Activated naive CD8-positive, alpha-beta T cell treated with anti-CD3 and anti-CD28 coated beads, Interleukin-2, amount 10 ng/mL, durations not matched to agents 7 days and 5 days (primary cell): ENCODE measurements at regions of chr19 and their contacts with region 1.

Region 1: GRCh38 chr19:38842439-38843174 is 7.2 kb downstream of the HNRNPL start:
- DNase-seq: peak; percentile 71
- ATAC-seq: peak; percentile 91
- H3K4me3 Mint-ChIP-seq: peak overlapping the region; percentile 79
- H3K27ac Mint-ChIP-seq: peak overlapping the region; percentile 96
- H3K4me1 Mint-ChIP-seq: peaks cover 48% of the 10 kb centered on the region
- H3K27me3 Mint-ChIP-seq: no peaks in the 10 kb centered on the region

Region 2: GRCh38 chr19:38734426-38735256 is 108.0 kb before region 1 on chr19:
- POLR2A ChIA-PET with region 1: interaction called, 10 read pairs
- DNase-seq: peak; percentile 68
- ATAC-seq: peak; percentile 53
- H3K4me3 Mint-ChIP-seq: peak overlapping the region; percentile 88
- H3K27ac Mint-ChIP-seq: peak overlapping the region; percentile 90
- H3K4me1 Mint-ChIP-seq: peaks cover 26% of the 10 kb centered on the region
- H3K27me3 Mint-ChIP-seq: no peaks in the 10 kb centered on the region

Region 3: DNA sequence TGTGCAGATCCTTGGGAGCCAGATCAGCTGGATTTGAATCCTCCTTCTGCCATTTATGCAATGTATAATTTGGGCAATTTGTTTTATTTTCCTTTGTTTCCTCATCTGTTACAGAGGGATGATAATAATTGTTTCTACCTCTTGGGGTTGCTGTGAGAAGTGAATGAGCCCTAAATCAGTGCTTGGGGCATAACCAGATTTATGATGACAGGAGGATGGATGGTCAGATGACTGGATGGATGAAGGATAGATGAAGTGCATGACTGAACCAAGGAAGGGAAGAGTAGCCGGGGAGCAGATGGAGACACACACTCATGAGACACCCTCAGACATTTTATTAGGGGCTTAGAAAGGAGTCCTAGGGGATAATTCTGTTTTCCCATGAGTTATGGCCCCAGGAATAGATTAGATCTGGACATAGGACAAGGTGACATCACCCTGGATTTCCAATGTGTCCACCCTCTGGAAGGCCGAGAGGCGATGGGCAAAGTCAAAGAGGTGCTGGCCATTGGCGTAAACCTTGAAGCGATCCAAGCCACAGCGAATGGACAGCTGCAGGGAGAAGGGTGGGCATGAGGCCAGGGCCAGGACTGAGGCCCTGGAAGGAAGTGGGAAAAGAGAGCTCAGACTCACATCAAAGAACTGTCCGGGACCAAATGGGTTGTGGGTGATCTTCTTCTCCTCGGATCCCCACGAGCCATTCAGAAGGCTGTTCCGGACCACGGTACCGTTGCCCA is 41.1 kb before region 1 on chr19:
- POLR2A ChIA-PET with region 1: no interaction called
- DNase-seq: no peak
- ATAC-seq: no peak
- H3K4me3 Mint-ChIP-seq: no peak overlapping the region
- H3K27ac Mint-ChIP-seq: no peak overlapping the region
- H3K4me1 Mint-ChIP-seq: peaks cover 6% of the 10 kb centered on the region
- H3K27me3 Mint-ChIP-seq: no peaks in the 10 kb centered on the region

Region 4: DNA sequence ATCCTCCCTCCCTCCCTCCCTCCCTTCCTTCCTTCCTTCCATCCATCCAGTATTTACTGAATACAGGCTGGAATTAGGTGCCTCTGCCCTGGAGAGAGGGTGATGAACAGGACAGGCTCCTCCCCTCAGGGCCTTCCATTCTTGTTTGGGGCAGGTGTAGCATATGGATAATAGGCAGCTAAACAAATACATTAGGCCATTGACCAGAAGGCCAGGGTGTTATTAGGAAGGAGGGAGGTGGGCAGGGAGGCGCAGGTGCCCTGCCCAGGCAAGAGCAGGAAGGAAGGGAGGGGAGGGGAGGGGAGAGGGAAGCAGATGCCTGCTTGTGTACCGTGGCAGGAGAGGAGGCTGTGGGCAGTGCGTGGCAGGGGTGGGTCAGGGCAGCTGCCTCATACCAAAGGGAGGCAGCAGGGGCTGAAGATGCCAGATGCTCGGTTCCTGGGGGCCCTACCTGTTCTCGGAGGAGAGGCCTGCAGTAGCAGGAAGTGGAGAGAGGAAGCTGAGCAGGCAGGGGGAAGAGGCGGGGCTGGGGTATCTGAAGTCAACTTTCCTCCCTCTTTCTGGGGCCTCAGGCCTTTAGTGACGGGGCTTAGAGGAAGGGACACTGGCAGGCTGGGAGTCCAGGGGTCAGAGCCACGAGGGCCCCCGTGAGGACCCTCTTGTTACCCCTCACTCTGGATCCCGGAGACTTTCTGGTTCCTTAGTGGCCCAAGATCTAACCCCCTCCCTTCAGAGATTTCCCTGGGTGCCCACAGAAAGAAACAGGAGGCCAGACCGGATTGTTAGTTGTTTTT is 35.4 kb after region 1 on chr19 and contains the start of gene RINL:
- POLR2A ChIA-PET with region 1: interaction called, 18 read pairs
- DNase-seq: peak; percentile 70
- ATAC-seq: peak; percentile 92
- H3K4me3 Mint-ChIP-seq: peak within 1 kb of the TSS; percentile 97
- H3K27ac Mint-ChIP-seq: peak within 1 kb of the TSS; percentile 97
- H3K4me1 Mint-ChIP-seq: peaks cover 22% of the 10 kb centered on the region
- H3K27me3 Mint-ChIP-seq: no peaks in the 10 kb centered on the region
- total RNA-seq, gene RINL: 71.3 to 74.2 TPM